Dorsolateral prefrontal cortex (tissue), 120 donors: ENCODE measurements at regions of chr1 and their contacts with region 1.

Region 1: GRCh38 chr1:207828485-207829158 is 76.8 kb downstream of the CD46 start:
- DNase-seq: peak in 8 of 10 donors; percentile 48 to 87 (median 76)
- H3K4me3 ChIP-seq: peak overlapping the region in 7 of 59 donors; percentile 3 to 28 (median 18)
- H3K27ac ChIP-seq: peak overlapping the region; percentile 3 to 100 (median 99)
- H3K27me3 ChIP-seq: no peaks in the 10 kb centered on the region
- CTCF ChIP-seq: peak; percentile 69 to 97 (median 86)

Region 2: GRCh38 chr1:207787776-207788175 is 40.8 kb before region 1 on chr1:
- intact Hi-C with region 1: no loop called
- DNase-seq: no peak
- H3K4me3 ChIP-seq: no peak overlapping the region
- H3K27ac ChIP-seq: no peak overlapping the region
- H3K27me3 ChIP-seq: no peaks in the 10 kb centered on the region
- CTCF ChIP-seq: no peak

Region 3: DNA sequence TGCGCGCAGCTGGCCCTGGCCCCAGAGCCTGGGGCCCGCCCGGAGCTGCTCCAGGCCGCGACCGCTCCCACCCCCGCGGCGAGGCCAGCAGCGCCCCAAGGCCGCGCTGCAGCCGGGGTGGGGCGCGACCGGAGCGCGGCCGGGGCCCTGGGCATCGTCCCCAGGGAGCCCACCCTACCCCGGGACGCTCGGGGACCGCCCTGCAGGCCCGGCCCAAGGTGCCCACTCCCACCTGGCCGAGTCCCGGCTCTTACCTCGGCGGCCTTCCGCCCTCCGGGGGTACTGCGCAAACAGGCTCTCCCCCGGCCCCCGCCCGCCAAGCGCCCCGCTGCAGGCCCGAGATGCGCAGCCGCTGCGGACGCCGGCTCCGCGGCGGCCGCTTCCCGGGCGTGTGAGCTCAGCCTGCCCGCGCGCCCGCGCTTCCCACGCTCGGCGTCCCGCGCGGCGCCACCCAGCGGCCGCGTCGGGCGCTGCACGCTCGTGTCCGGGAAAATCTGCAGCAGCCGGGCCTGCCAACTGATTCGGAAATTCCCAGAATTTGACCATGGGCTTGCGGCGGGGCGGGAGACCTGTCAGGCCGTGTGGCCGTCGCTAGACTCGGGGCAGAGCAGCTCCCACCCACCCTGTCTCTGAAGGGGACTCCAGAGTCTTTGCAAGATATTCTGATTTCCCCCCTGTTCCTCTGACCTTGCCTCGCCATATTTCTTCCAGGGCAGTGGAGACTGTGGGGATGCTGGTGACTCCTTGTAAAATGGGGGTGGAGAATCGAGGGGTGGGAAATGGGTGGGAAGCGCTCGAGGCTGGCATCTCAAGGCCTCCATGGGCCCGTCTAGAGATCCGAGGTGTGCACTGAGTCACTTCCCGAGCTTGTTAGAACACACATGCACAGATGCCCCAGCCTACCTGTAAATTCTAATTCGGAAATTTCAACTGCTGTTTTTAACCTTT is 40.4 kb after region 1 on chr1:
- intact Hi-C with region 1: loop called (anchors 1 to 2 kb)
- DNase-seq: peak; percentile 61 to 90 (median 70)
- H3K4me3 ChIP-seq: peak overlapping the region; percentile 74 to 99 (median 87)
- H3K27ac ChIP-seq: peak overlapping the region; percentile 69 to 99 (median 96)
- H3K27me3 ChIP-seq: no peaks in the 10 kb centered on the region
- CTCF ChIP-seq: peak; percentile 45 to 96 (median 76)